ENCODE measurements at regions of chr6 and their contacts with region 1.

Region 1: DNA sequence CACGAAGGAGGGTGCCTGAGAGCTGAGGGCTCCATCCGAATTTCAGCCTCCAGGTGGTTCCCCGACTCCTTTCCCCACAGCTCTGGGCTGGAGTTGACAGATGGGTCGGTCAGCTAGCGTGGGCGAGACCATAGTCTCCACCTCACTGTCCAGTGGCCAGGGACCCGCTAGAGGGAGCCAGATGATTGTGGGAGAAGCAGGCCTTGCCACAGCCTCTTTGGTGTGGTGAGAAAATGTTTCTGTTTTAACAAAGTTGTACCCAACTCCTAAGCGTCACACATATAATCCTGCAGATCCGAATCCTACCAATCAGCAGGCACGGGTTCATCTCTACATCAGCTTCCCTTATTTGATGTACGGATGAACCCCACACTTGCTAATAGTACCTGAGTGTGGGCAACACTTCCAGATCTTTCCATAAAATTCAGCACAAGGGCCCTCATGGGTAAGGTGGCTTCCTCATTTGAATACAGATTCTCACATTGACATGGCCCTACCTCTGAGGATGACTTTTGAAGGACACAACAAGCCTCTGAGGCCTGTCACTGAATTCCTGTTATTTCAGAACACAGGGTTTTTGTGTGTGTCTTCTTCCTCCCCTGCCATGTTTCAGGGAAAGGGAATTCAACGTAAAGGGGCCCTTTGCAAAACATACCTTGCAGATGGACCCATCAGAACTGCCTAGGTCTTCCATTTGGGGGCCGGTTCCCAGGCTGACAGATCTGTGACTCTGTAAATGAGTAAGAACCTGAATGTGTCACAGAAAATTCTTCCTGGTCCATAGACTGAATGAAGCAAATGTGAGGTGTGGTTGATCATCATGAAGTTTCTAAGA is 103.2 kb upstream of the DUSP22 start:
- DNase-seq: peak; percentile 77 to 91 (median 85)
- ATAC-seq: peak; percentile 88 to 95 (median 92)
- H3K4me3 ChIP-seq: no peak overlapping the region
- H3K27ac ChIP-seq: no peak overlapping the region
- H3K4me1 ChIP-seq: peaks cover 0 to 17% (median 0%) of the 10 kb centered on the region in 12 donors
- H3K27me3 ChIP-seq: no peaks in the 10 kb centered on the region
- CTCF ChIP-seq: peak; percentile 76 to 94 (median 88)
- POLR2A ChIP-seq: no peak

Region 2: DNA sequence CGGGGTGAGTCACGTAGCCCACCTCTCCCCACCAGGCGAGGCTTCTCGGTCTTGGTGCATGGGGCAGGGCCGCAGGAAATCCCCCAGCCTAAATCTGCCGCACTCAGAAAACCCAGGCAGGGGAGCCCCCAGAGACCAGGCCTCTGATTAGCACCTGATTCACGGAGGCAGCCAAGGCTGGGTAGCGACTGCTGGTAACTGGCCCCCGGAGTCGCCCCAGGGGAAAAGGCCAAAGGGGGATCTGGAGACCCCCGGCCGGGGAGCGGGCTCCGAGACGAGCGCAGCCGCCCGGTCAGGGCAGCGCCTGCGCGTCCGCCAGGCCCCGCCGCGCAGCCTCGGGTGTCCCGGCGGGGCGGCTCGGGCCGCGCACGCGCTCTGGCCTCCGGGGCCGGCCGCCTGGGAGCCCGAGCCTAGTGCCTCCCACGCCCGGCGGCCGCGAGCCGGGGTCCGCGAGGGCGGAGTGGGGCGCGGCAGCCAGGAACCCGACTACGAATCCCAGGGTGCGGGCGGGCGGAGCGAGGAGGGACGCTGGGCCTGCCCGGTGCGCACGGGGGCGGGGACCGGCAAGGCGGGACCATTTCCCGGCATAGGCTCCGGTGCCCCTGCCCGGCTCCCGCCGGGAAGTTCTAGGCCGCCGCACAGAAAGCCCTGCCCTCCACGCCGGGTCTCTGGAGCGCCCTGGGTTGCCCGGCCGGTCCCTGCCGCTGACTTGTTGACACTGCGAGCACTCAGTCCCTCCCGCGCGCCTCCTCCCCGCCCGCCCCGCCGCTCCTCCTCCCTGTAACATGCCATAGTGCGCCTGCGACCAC is 102.9 kb after region 1 on chr6 and contains the start of gene DUSP22:
- intact Hi-C with region 1: loop called in 1 of 10 experiments (anchors 5 kb)
- DNase-seq: peak; percentile 91 to 94 (median 93)
- ATAC-seq: peak; percentile 70 to 93 (median 88)
- H3K4me3 ChIP-seq: peak within 1 kb of the TSS; percentile 55 to 87 (median 71)
- H3K27ac ChIP-seq: peak within 1 kb of the TSS; percentile 89 to 99 (median 96)
- H3K4me1 ChIP-seq: peaks cover 0 to 76% (median 20%) of the 10 kb centered on the region in 12 donors
- H3K27me3 ChIP-seq: no peaks in the 10 kb centered on the region
- CTCF ChIP-seq: peak in 1 of 12 donors; percentile 27
- POLR2A ChIP-seq: peak; percentile 16 to 78
- total RNA-seq, gene DUSP22: 40.4 to 79.9 (median 48.2) TPM

Region 3: GRCh38 chr6:373751-374724 is 185.0 kb after region 1 on chr6:
- intact Hi-C with region 1: loop called in 3 of 10 experiments (anchors 5 kb)
- DNase-seq: no peak
- ATAC-seq: peak; percentile 31 to 61 (median 35)
- H3K4me3 ChIP-seq: no peak overlapping the region
- H3K27ac ChIP-seq: no peak overlapping the region
- H3K4me1 ChIP-seq: peaks cover 0 to 10% (median 5%) of the 10 kb centered on the region in 12 donors
- H3K27me3 ChIP-seq: peaks cover 0 to 68% (median 27%) of the 10 kb centered on the region in 9 donors
- CTCF ChIP-seq: peak in 9 of 12 donors; percentile 14 to 54 (median 33)
- POLR2A ChIP-seq: no peak

Region 4: DNA sequence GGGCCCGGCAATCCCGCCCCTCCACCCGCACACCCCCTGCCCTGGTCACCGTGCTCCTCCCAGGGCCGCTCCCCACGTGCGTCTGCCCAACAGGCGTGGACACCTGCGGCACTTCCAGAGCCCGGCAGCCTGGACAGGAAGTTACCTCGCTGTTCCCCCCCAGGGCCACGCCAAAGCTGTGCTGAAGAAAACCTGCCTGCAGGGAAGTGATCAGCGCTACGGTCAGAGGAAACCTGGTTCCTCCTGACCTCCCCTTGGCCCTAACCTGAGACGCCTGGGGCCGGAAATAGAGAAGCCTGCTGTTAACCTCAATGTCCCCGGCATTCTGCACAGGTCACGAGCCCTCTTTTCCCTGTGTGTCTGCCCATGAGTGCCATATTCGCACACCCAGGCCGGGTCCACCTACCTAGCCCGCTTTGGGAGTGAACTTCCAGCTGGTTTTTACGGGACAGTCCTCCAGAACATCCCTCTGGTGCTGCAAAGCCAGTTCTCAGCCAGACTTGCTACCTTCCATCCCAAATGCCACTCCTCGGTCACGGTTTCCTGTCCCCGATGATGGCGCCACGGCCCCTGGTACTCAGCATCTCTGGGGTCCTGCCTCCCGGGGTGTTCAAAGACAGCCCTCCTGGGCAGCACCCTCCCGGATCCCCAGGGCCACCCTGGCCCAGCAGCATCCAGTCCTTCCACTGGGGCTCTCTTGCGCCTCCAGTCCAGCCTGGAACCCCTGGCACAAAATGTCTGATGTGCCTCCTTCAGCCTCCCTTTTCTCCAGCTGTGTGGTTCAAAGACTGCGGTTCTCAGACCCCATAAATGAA is 190.5 kb after region 1 on chr6:
- intact Hi-C with region 1: loop called in 3 of 10 experiments (anchors 5 kb)
- DNase-seq: peak in 1 of 5 donors; percentile 26
- ATAC-seq: no peak
- H3K4me3 ChIP-seq: no peak overlapping the region
- H3K27ac ChIP-seq: no peak overlapping the region
- H3K4me1 ChIP-seq: no peaks in the 10 kb centered on the region
- H3K27me3 ChIP-seq: peaks cover 0 to 83% (median 25%) of the 10 kb centered on the region in 9 donors
- CTCF ChIP-seq: no peak
- POLR2A ChIP-seq: no peak

Region 5: GRCh38 chr6:399785-400534 is 210.9 kb after region 1 on chr6:
- intact Hi-C with region 1: loop called in 2 of 10 experiments (anchors 5 kb)
- DNase-seq: no peak
- ATAC-seq: no peak
- H3K4me3 ChIP-seq: no peak overlapping the region
- H3K27ac ChIP-seq: no peak overlapping the region
- H3K4me1 ChIP-seq: no peaks in the 10 kb centered on the region
- H3K27me3 ChIP-seq: peaks cover 0 to 34% (median 17%) of the 10 kb centered on the region in 9 donors
- CTCF ChIP-seq: no peak
- POLR2A ChIP-seq: no peak

Region 6: DNA sequence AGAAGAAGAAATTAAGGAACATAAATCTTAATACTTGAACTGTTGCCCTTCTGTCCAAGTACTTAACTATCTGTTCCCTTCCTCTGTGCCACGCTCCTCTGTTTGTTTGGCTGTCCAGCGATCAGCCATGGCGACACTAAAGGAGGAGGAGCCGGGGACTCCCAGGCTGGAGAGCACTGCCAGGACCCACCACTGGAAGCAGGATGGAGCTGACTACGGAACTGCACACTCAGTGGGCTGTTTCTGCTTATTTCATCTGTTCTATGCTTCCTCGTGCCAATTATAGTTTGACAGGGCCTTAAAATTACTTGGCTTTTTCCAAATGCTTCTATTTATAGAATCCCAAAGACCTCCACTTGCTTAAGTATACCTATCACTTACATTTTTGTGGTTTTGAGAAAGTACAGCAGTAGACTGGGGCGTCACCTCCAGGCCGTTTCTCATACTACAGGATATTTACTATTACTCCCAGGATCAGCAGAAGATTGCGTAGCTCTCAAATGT is 219.6 kb after region 1 on chr6:
- intact Hi-C with region 1: loop called in 4 of 10 experiments (anchors 2 to 5 kb)
- DNase-seq: peak in 4 of 5 donors; percentile 39 to 73 (median 54)
- ATAC-seq: peak; percentile 97 to 100 (median 98)
- H3K4me3 ChIP-seq: no peak overlapping the region
- H3K27ac ChIP-seq: peak overlapping the region in 1 of 12 donors; percentile 29
- H3K4me1 ChIP-seq: peaks cover 0 to 11% (median 0%) of the 10 kb centered on the region in 12 donors
- H3K27me3 ChIP-seq: peaks cover 0 to 19% (median 0%) of the 10 kb centered on the region in 9 donors
- CTCF ChIP-seq: peak; percentile 19 to 53 (median 38)
- POLR2A ChIP-seq: no peak

Region 7: DNA sequence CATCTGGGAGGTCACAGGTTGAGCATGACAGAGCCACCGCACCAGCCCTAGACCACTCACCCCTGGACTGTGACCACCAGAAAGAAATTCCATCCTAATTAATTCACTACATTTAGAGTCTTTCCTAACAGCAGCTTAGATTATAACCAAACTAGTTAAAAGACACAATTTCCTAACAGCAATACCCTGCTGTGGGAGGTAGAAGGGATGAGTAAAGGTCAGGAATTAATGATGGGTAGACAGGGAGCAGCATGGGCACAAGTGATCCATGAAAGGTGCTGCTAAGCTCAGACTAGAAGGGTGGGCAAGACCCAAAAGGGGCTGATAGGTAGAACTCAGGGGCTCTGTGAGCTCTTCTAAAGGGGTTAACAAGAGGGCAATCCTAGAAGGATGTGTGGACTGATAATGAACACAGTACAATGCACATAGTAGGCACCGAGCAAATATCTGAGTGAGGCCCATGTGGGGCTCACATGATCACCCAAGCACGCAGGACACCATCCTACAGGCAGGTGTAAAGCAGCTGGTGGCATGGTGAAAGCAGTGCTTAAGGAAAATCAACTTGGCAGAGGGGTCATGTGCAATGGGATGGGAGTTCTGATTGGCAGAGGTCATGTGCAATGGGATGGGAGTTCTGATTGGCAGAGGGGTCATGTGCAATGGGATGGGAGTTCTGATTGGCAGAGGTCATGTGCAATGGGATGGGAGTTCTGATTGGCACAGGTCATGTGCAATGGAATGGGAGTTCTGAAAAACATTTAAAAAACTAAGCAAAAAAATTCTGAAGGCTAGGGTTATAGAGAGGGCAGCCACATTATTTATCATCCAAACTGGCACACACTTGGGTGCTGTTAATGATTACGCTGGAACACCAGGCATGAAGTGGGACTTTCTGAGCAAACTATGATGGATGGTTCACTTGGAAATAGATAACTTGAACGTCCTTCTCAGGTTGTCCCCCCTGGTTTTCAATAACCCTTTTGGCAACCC is 934.6 kb after region 1 on chr6:
- intact Hi-C with region 1: no loop called
- DNase-seq: no peak
- ATAC-seq: no peak
- H3K4me3 ChIP-seq: no peak overlapping the region
- H3K27ac ChIP-seq: no peak overlapping the region
- H3K4me1 ChIP-seq: peaks cover 0 to under 1% (median 0%) of the 10 kb centered on the region in 12 donors
- H3K27me3 ChIP-seq: peaks cover 0 to 10% (median 0%) of the 10 kb centered on the region in 9 donors
- CTCF ChIP-seq: no peak
- POLR2A ChIP-seq: no peak

Region 8: DNA sequence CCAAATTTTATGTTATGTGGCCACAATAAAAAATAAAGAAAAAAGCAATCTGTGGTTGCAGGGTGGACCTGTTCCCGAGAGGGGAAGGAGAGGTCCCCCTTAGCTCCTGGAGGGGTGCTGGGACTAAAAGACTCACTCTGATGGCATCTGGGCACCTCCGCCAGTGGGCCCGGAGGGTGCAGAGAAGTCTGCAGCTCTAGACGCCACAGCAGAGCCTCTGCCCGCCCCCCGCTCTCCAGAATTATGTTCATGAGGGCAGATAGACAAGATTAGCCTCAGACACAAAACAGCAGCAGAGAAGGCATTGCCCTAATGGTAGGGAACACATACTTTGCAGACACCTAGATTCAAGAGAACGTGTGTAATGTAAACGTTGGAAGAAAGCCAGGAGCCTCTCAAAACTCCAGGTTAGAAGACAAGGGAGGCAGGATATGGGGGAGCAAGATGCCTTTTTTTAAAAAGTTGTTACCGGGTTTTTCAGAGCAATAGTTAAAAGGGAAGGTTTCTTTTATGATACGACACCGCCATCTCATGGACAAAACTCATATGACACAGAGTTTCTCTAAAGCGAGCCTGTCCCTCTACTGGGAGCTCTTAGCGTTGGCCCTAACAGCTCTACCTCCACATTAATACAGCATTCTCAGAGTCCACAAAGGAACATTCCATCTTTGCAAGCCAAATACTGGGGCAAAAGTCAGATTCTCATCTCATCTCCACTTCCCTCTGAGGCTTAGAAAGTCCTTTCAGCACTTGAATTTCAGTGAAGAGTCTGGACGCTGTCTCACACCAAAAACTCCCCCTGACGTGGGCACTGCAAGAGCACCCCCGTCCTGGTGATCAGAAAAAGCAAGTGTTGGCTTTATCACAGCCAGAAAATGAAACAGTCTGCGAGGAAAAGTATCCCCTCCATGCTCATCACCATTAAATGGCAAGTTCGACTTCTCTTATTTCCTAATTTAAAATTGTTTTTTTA is 1247.6 kb after region 1 on chr6:
- intact Hi-C with region 1: loop called in 1 of 10 experiments (anchors 5 kb)
- DNase-seq: no peak
- ATAC-seq: peak; percentile 69 to 84 (median 80)
- H3K4me3 ChIP-seq: no peak overlapping the region
- H3K27ac ChIP-seq: no peak overlapping the region
- H3K4me1 ChIP-seq: peaks cover 0 to 5% (median 0%) of the 10 kb centered on the region in 12 donors
- H3K27me3 ChIP-seq: peaks cover 0 to 54% (median 23%) of the 10 kb centered on the region in 9 donors
- CTCF ChIP-seq: peak; percentile 63 to 81 (median 72)
- POLR2A ChIP-seq: no peak

Measured in heart left ventricle (tissue), 16 donors.